ENCODE measurements at regions of chr13 and their contacts with region 1.

Region 1: DNA sequence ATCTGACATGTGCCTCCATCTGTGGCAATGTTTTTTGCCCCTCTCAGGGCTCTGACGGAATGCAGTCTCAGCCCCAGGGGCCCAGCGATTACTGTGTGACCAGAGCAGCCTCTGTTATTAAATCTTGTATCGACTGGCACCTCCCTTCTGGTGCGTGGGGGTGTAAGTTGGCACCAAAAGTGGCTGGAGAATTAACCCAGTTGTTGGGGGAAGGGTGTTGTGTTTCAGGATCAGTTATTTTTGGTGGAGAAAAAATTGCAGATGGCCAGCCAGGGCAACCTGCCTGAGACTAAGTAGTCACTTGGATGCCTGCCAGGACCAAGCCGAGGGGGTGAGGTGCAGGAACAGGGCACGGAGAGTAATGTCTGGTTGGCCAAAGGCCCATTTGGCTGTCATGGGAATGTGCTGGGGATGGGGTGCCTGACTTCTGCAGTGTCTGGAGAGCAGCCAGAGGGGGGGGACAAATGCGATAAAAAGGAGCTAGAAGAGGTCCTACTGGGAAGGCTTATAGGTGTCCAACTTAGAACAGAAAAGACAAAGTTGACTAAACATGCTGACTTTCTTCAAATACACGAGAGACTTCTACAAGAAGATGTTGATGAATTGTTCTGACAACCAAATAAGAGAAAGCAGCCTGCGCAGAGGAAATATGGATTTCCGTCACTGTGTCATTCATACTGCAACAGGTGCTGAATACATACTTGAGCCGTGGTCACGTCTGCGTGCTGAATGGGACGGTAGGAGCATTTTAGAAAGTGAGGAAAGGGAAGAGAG is 69.8 kb downstream of the SIAH3 start:
- DNase-seq: peak; percentile 89
- H3K4me3 ChIP-seq: peak overlapping the region; percentile 10
- H3K27ac ChIP-seq: peak overlapping the region; percentile 83
- H3K4me1 ChIP-seq: peaks cover 58% of the 10 kb centered on the region
- H3K27me3 ChIP-seq: no peaks in the 10 kb centered on the region
- CTCF ChIP-seq: no peak

Region 2: DNA sequence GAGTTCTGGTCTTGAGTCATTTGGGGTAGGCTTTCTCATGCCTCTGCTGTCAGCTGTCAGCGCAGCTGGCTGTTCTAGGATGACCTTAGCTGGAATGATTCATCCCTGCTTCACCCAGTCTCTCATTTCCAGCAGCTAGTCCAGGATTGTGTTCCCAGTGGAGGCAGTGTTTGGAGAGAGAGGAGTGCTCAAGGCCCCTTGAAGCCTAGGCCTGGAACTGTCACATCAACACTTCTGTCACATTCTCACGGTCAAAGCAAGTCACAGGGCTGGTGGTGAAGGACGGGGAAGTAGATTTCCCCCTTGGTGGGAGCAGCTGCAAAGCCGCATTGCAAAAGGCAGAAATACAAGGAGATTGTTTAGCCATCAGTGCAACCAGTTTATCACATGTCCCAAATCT is 455.9 kb before region 1 on chr13:
- CTCF ChIA-PET with region 1: no interaction called
- POLR2A ChIA-PET with region 1: interaction called, 10 read pairs
- intact Hi-C with region 1: no loop called
- DNase-seq: no peak
- H3K4me3 ChIP-seq: no peak overlapping the region
- H3K27ac ChIP-seq: peak overlapping the region; percentile 53
- H3K4me1 ChIP-seq: peaks cover 41% of the 10 kb centered on the region
- H3K27me3 ChIP-seq: no peaks in the 10 kb centered on the region
- CTCF ChIP-seq: no peak

Region 3: GRCh38 chr13:45851171-45851921 is 69.6 kb after region 1 on chr13 and contains the start of gene SIAH3:
- CTCF ChIA-PET with region 1: no interaction called
- POLR2A ChIA-PET with region 1: interaction called, 11 read pairs
- intact Hi-C with region 1: no loop called
- DNase-seq: peak; percentile 89
- H3K4me3 ChIP-seq: peak within 1 kb of the TSS; percentile 77
- H3K27ac ChIP-seq: peak within 1 kb of the TSS; percentile 13
- H3K4me1 ChIP-seq: peaks cover 18% of the 10 kb centered on the region
- H3K27me3 ChIP-seq: no peaks in the 10 kb centered on the region
- CTCF ChIP-seq: no peak
- total RNA-seq, gene SIAH3: 4.6 and 5.8 TPM in 2 replicates

Region 4: GRCh38 chr13:46062185-46062584 is 280.4 kb after region 1 on chr13:
- CTCF ChIA-PET with region 1: no interaction called
- POLR2A ChIA-PET with region 1: interaction called, 20 read pairs
- intact Hi-C with region 1: no loop called
- DNase-seq: no peak
- H3K4me3 ChIP-seq: no peak overlapping the region
- H3K27ac ChIP-seq: peak overlapping the region; percentile 66
- H3K4me1 ChIP-seq: peaks cover 24% of the 10 kb centered on the region
- H3K27me3 ChIP-seq: no peaks in the 10 kb centered on the region
- CTCF ChIP-seq: no peak

Measured in A673 (cell line).